ENCODE measurements at regions of chr3 and their contacts with region 1.

Region 1: GRCh38 chr3:169133178-169134161 is 530.0 kb downstream of the MECOM start:
- DNase-seq: no peak
- H3K4me3 ChIP-seq: no peak overlapping the region
- H3K27ac ChIP-seq: no peak overlapping the region
- H3K4me1 ChIP-seq: peaks cover 5% of the 10 kb centered on the region
- H3K27me3 ChIP-seq: no peaks in the 10 kb centered on the region
- CTCF ChIP-seq: peak; percentile 41 to 55

Region 2: GRCh38 chr3:169668957-169669681 is 535.6 kb after region 1 on chr3:
- CTCF ChIA-PET with region 1: no interaction called
- dilution Hi-C with region 1: no loop called
- in situ Hi-C with region 1: loop called in 1 of 2 experiments (anchors 10 kb)
- intact Hi-C with region 1: loop called (anchors 1 kb)
- DNase-seq: peak; percentile 67
- H3K4me3 ChIP-seq: peak overlapping the region; percentile 41 to 46 (median 43)
- H3K27ac ChIP-seq: no peak overlapping the region
- H3K4me1 ChIP-seq: peaks cover 12% of the 10 kb centered on the region
- H3K27me3 ChIP-seq: peaks cover 50% of the 10 kb centered on the region
- CTCF ChIP-seq: peak; percentile 37 to 88